ENCODE measurements at regions of chr6 and their contacts with region 1.

Region 1: DNA sequence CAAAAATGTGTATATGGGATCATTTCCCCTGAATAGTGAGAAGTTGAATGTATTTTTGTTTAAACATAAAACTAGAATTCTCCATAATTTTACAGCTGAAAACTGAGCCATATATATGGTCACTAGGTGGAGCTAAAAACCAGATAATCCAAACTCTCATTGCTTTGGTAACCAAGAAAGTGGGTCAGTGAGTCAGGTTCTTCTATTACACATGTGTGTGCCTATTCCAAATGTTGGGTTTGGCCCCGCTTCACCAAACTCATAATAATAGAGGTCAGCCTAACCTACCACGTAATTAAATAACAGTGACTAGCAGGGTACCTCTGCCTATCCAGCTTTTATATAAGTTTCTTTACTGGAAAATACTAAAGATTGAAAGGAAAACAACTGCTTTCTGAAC is 19.3 kb upstream of the RNGTT start:
- DNase-seq: no peak
- H3K4me3 ChIP-seq: no peak overlapping the region
- H3K27ac ChIP-seq: no peak overlapping the region
- H3K4me1 ChIP-seq: peaks cover 0 to 2% (median 0%) of the 10 kb centered on the region in 4 experiments; a peak in 1 of 7 replicates
- H3K27me3 ChIP-seq: peaks cover 0 to 1% (median 0%) of the 10 kb centered on the region in 4 experiments; a peak in 2 of 7 replicates
- CTCF ChIP-seq: peak in 2 of 3 experiments; percentile 56 to 67; a peak in 3 of 4 replicates
- EP300 ChIP-seq: no peak
- POLR2A ChIP-seq: no peak
- RAD21 ChIP-seq: peak; percentile 86 to 89

Region 2: GRCh38 chr6:88722686-88723085 is 260.0 kb before region 1 on chr6:
- CTCF ChIA-PET with region 1: no interaction called
- POLR2A ChIA-PET with region 1: no interaction called
- DNase-seq: no peak
- H3K4me3 ChIP-seq: no peak overlapping the region
- H3K27ac ChIP-seq: no peak overlapping the region
- H3K4me1 ChIP-seq: peaks cover 0 to 6% (median 1%) of the 10 kb centered on the region in 4 experiments; a peak in 3 of 7 replicates
- H3K27me3 ChIP-seq: no peaks in the 10 kb centered on the region
- CTCF ChIP-seq: no peak
- EP300 ChIP-seq: no peak
- POLR2A ChIP-seq: no peak
- RAD21 ChIP-seq: no peak

Region 3: DNA sequence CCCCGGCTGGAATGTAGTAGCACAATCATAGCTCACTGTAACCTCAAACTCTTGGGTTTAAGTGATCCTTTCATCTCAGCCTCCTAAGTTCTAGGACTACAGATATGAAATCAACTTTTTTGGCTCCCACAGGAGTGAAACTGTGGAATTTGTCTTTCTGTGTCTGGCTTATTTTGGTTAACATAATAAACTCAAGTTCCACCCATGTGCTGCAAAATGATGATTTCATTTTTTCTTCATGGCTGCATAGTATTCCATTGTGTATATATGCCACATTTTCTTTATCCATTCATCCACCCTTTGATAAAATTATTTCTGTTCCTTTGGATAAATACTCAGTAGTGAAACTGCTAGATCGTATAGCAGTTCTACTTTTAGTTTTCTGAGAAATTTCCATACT is 49.2 kb before region 1 on chr6:
- CTCF ChIA-PET with region 1: no interaction called
- POLR2A ChIA-PET with region 1: no interaction called
- DNase-seq: no peak
- H3K4me3 ChIP-seq: no peak overlapping the region
- H3K27ac ChIP-seq: no peak overlapping the region
- H3K4me1 ChIP-seq: no peaks in the 10 kb centered on the region
- H3K27me3 ChIP-seq: no peaks in the 10 kb centered on the region
- CTCF ChIP-seq: no peak
- EP300 ChIP-seq: no peak
- POLR2A ChIP-seq: no peak
- RAD21 ChIP-seq: no peak

Region 4: DNA sequence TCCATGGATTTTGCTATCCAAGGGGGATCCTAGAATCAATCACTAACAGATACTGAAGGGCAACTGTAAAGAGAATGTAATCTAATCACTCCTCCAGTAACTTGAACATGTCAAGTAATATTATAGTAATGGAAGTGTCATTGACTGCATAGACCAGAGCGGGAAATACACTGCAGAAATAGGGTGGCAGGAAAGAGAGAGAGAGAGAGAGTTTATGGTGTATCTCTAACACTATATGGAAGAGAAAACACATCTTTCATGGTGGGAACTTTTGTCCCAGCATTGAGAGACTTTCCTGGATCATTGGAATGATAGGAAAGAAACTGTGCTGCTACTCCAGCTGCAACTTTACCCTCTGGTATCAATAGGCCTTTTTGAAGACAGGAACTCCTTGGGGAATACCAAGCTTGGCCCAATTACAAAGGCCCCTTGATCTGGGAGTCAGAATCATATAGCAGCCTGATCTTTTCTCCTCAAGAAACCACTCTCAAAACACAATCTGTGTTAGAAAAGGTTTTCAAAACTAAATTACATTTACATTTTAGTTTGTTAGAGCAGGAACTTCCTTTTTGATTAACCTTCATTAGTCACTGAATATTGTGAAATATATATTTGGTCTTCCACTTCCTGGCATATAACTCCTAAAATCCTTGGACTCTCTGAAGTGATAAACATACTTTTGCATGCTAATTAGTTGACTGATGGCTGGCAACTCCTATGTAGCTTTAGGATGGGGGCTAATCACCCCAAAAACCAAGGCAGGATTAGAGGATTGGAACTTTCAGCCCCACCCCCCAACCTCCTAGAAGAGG is 10.2 kb after region 1 on chr6:
- CTCF ChIA-PET with region 1: interaction called, 22 read pairs
- POLR2A ChIA-PET with region 1: no interaction called
- DNase-seq: no peak
- H3K4me3 ChIP-seq: no peak overlapping the region
- H3K27ac ChIP-seq: no peak overlapping the region
- H3K4me1 ChIP-seq: no peaks in the 10 kb centered on the region
- H3K27me3 ChIP-seq: no peaks in the 10 kb centered on the region
- CTCF ChIP-seq: no peak
- EP300 ChIP-seq: no peak
- POLR2A ChIP-seq: no peak
- RAD21 ChIP-seq: no peak

Region 5: GRCh38 chr6:89026151-89026550 is 43.4 kb after region 1 on chr6:
- CTCF ChIA-PET with region 1: interaction called, 16 read pairs
- POLR2A ChIA-PET with region 1: no interaction called
- DNase-seq: no peak
- H3K4me3 ChIP-seq: no peak overlapping the region
- H3K27ac ChIP-seq: no peak overlapping the region
- H3K4me1 ChIP-seq: peaks cover 0 to 16% (median 5%) of the 10 kb centered on the region in 4 experiments; a peak in 4 of 7 replicates
- H3K27me3 ChIP-seq: no peaks in the 10 kb centered on the region
- CTCF ChIP-seq: no peak
- EP300 ChIP-seq: no peak
- POLR2A ChIP-seq: no peak
- RAD21 ChIP-seq: no peak

Region 6: GRCh38 chr6:89080542-89081422 is 98.1 kb after region 1 on chr6 and contains the start of gene PNRC1:
- CTCF ChIA-PET with region 1: interaction called, 40 read pairs
- POLR2A ChIA-PET with region 1: interaction called, 12 read pairs
- DNase-seq: peak; percentile 100
- H3K4me3 ChIP-seq: peak within 1 kb of the TSS; percentile 79 to 98 (median 94)
- H3K27ac ChIP-seq: peak within 1 kb of the TSS; percentile 95
- H3K4me1 ChIP-seq: peaks cover 8 to 26% (median 13%) of the 10 kb centered on the region in 4 experiments
- H3K27me3 ChIP-seq: no peaks in the 10 kb centered on the region
- CTCF ChIP-seq: no peak
- EP300 ChIP-seq: 0 out of 3 replicates have a peak, but pooled peaks of 1 of the 2 experiments have one; percentile 4
- POLR2A ChIP-seq: peak; percentile 95 to 100
- RAD21 ChIP-seq: no peak
- total RNA-seq, gene PNRC1: 48.5 and 50.2 TPM in 2 replicates

Region 7: DNA sequence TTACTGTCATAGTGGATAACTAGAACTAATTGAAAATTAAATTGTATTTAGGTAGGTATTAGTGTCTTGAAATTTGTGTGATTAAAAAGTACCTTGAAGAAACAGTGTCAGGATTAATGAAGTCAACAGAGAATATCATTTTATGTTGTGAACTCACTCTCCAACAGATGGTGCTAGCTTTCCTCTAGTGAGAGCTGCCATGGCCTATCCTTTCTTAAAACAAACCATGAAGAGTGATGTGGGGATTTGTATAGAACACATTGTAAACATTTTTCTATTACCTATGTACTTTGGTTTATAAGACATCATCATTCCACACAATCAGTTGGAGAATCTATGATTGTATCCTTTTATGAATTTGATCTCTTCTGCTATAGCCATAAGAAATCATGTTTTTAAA is 139.9 kb after region 1 on chr6:
- CTCF ChIA-PET with region 1: interaction called, 43 read pairs
- POLR2A ChIA-PET with region 1: interaction called, 3 read pairs
- DNase-seq: no peak
- H3K4me3 ChIP-seq: no peak overlapping the region
- H3K27ac ChIP-seq: no peak overlapping the region
- H3K4me1 ChIP-seq: no peaks in the 10 kb centered on the region
- H3K27me3 ChIP-seq: peaks cover 7 to 16% (median 15%) of the 10 kb centered on the region in 4 experiments
- CTCF ChIP-seq: peak in 2 of 3 experiments; percentile 49 to 57; a peak in 2 of 4 replicates
- EP300 ChIP-seq: no peak
- POLR2A ChIP-seq: no peak
- RAD21 ChIP-seq: peak; percentile 77 to 82

Region 8: DNA sequence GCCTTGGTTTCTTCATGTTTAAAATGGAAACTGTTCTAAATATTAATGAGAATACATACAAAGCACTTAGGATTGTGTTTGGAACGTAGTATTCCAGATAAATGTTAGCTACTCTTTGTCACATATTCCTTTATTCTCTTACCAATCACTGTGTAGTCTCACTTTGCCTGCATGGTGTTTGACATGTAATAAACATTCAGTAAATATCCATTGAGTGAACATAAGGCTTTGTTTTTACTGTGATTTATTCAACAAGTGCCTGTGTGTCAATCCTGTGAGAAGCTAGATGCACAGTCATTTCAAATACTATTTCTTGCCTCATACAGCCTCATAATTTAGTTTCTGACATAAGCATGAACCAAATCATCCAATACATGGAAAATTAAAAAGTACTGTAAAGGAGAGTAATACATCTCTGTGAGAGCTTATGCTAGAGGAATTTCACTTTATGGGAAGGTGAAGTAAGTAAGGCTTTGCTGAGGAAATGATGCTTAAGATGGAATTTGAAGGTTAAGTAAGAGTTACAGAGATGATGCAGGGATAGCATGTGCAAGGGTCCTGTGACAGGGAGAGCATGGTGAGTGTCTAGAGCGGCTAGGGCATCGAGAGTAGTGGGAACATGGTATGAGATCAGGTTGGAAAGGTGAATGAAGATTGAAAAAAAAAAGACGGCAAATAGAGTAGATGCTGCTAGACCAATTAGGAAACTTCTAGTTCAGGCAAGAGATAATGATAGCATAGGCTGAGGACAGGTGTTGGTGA is 177.8 kb after region 1 on chr6:
- CTCF ChIA-PET with region 1: interaction called, 23 read pairs
- POLR2A ChIA-PET with region 1: no interaction called
- DNase-seq: no peak
- H3K4me3 ChIP-seq: no peak overlapping the region
- H3K27ac ChIP-seq: no peak overlapping the region
- H3K4me1 ChIP-seq: peaks cover 0 to 3% (median 0%) of the 10 kb centered on the region in 4 experiments; a peak in 1 of 7 replicates
- H3K27me3 ChIP-seq: no peaks in the 10 kb centered on the region
- CTCF ChIP-seq: no peak
- EP300 ChIP-seq: no peak
- POLR2A ChIP-seq: no peak
- RAD21 ChIP-seq: no peak

Region 9: DNA sequence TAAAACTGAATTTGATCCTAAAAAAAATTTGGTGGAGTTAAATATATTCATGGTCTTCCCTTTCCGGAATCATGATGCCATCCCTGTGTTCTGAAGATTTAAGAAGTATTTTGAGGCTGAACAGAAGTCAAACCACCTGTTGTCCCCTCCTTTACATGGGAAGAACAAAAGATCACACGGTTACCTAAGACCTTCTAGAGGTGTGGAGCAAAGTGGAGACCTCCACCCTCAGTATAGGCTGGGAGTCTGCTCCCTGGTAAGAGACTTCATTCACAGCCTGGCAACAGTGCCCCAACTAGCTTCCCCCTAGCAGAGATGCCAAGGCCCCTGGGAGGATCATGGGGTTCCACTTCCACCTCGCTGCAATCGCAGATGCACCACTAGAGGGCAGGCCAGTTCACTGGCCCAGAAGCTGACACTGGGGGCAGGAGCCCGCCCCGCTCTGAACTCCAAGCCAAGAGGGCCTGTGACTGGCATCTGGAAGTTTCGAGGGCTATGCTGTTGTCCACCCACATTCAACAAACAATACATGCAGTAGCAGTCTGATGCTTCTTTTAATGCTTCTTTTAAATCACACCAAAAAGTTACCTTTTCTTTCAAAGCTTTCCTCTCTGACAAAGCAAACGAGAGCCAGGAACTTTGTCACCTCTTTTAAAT is 389.3 kb after region 1 on chr6:
- CTCF ChIA-PET with region 1: interaction called, 12 read pairs
- POLR2A ChIA-PET with region 1: no interaction called
- DNase-seq: peak in 1 of 2 experiments; percentile 92
- H3K4me3 ChIP-seq: no peak overlapping the region
- H3K27ac ChIP-seq: no peak overlapping the region
- H3K4me1 ChIP-seq: peaks cover 0 to 7% (median 4%) of the 10 kb centered on the region in 4 experiments; a peak in 4 of 7 replicates
- H3K27me3 ChIP-seq: no peaks in the 10 kb centered on the region
- CTCF ChIP-seq: peak; percentile 95 to 99 (median 98)
- EP300 ChIP-seq: no peak
- POLR2A ChIP-seq: no peak
- RAD21 ChIP-seq: peak; percentile 84 to 91

Measured in H1 (cell line).